ENCODE measurements at regions of chr19 and their contacts with region 1.

Region 1: DNA sequence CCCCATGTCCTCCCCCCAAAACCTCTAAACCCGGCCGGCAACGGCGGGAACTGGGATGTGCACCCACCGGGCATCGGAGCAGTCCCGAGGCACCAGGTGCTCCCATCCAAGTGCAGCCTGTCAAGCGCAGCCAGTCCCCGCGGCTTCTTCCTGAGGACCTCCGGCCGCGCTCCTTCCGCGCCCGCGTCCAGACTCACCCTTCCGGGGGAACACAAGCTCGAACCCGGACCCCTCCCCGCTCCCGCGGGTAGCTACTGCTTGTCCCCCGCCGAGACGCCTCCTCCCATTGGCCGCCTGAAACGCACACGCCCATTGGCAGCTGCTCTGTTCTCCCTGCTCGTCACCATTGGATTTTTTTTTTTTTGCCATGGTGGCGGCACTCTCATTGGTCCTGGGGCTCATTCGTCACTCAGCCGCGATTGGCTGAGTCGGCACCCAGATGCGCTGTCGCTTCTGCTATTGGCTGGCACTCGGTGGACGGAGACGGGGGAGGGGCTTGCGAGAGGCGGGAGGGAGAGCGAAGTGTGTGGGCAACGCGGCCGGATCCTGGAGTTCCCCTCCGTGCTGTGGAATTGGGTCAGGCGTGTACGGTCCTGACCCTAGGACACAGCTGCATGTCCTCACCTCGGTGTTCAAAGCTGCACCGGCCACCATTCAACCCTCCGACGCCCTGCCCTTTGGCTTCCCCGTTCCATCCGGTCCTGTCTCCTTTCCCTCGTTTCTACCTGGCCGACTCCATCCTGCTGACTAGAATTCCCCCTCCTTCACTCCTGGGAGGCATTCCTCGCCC is at the start of gene TYK2:
- DNase-seq: peak; percentile 96 to 99 (median 98)
- H3K4me3 ChIP-seq: peak within 1 kb of the TSS; percentile 98
- H3K27ac ChIP-seq: peak within 1 kb of the TSS in 1 of 2 donors; percentile 44
- H3K4me1 ChIP-seq: peaks cover 5% of the 10 kb centered on the region
- H3K27me3 ChIP-seq: no peaks in the 10 kb centered on the region
- CTCF ChIP-seq: no peak
- EP300 ChIP-seq: no peak
- POLR2A ChIP-seq: peak; percentile 35
- total RNA-seq, gene TYK2: 55.4 to 118 (median 81.6) TPM

Region 2: GRCh38 chr19:10269333-10270179 is 111.0 kb before region 1 on chr19:
- intact Hi-C with region 1: loop called in 1 of 4 experiments (anchors 1 kb)
- DNase-seq: peak; percentile 76 to 91 (median 87)
- H3K4me3 ChIP-seq: peak overlapping the region; percentile 39
- H3K27ac ChIP-seq: peak overlapping the region in 1 of 2 donors; percentile 65
- H3K4me1 ChIP-seq: peaks cover 8% of the 10 kb centered on the region
- H3K27me3 ChIP-seq: no peaks in the 10 kb centered on the region
- CTCF ChIP-seq: peak; percentile 84 to 93 (median 92)
- EP300 ChIP-seq: no peak
- POLR2A ChIP-seq: no peak

Region 3: DNA sequence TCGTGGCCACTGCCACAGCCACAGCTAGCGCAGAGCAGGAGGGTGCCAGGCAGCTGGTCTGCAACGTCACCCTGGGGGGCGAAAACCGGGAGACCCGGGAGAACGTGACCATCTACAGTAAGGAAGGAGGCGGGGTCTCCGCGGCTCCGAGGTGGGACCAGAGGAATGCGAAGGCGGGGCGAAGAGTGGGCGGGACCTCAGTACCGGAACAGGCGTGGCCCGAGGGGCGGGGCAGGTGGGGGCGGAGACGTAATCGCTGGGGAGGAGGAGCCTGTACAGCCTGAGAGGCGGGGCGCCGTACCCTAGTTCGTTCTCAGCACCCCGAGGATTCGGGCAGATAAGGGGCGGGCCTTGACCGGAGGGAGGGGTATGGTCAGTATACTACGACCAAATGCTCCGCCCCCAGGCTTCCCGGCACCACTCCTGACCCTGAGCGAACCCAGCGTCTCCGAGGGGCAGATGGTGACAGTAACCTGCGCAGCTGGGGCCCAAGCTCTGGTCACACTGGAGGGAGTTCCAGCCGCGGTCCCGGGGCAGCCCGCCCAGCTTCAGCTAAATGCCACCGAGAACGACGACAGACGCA is 88.2 kb before region 1 on chr19:
- intact Hi-C with region 1: no loop called
- DNase-seq: peak; percentile 59 to 85 (median 66)
- H3K4me3 ChIP-seq: peak overlapping the region; percentile 4
- H3K27ac ChIP-seq: no peak overlapping the region
- H3K4me1 ChIP-seq: peaks cover 21% of the 10 kb centered on the region
- H3K27me3 ChIP-seq: peaks cover 6% of the 10 kb centered on the region
- CTCF ChIP-seq: no peak
- EP300 ChIP-seq: no peak
- POLR2A ChIP-seq: no peak

Region 4: GRCh38 chr19:10332955-10333757 is 47.4 kb before region 1 on chr19 and contains the start of gene RAVER1:
- intact Hi-C with region 1: loop called in 1 of 4 experiments (anchors 5 kb)
- DNase-seq: peak; percentile 98 to 99 (median 98)
- H3K4me3 ChIP-seq: peak within 1 kb of the TSS; percentile 91
- H3K27ac ChIP-seq: peak within 1 kb of the TSS; percentile 78 to 89
- H3K4me1 ChIP-seq: peaks cover 12% of the 10 kb centered on the region
- H3K27me3 ChIP-seq: no peaks in the 10 kb centered on the region
- CTCF ChIP-seq: no peak
- EP300 ChIP-seq: no peak
- POLR2A ChIP-seq: peak; percentile 81
- total RNA-seq, gene RAVER1: 13.1 to 50.7 (median 41.0) TPM

Region 5: DNA sequence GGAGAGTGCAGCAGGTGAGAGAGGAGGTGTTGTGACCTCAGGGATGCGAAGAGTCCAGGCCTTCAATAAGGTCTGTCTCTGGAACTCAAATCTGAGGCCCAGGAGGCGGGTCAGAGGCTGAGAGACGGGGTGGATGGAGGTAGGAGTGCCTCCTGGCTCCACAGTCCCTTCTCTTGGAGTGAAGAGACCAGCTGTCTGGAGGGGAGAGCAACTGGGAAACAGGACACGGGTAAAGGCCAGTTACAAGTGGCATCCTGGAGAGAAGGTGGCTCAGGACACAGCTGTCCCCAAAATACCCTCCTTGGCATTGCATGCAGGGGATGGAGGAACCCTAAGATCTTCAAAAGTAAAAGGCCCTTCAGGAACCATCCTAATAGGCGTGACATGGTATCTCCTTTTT is 59.1 kb after region 1 on chr19:
- intact Hi-C with region 1: no loop called
- DNase-seq: no peak
- H3K4me3 ChIP-seq: no peak overlapping the region
- H3K27ac ChIP-seq: no peak overlapping the region
- H3K4me1 ChIP-seq: no peaks in the 10 kb centered on the region
- H3K27me3 ChIP-seq: no peaks in the 10 kb centered on the region
- CTCF ChIP-seq: no peak
- EP300 ChIP-seq: no peak
- POLR2A ChIP-seq: no peak